CD8-positive, alpha-beta T cell (primary cell): ENCODE measurements at regions of chr6 and their contacts with region 1.

Region 1: DNA sequence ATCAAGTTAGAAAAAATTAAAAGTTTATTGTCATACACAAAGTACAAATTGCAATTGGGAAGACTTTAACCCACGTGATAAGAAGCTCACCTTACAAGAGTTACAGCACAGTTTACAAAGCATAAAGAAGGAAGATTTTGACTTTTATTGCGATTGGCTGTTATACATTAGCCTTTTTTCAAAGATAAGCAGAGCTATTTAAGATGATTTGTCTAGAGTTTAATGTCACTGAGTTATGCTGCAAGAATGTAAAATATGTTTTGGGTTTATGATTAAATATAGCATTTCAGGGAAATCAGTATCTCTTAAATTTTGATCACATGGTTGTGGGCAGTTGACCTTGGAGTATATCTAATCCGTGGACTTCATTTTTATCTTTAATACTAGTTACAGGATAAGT is 664.2 kb upstream of the PTCHD4 start:
- DNase-seq: no peak
- ATAC-seq: no peak
- H3K4me3 ChIP-seq: no peak overlapping the region
- H3K4me3 Mint-ChIP-seq: no peak overlapping the region
- H3K27ac ChIP-seq: no peak overlapping the region
- H3K27ac Mint-ChIP-seq: no peak overlapping the region
- H3K4me1 ChIP-seq: no peaks in the 10 kb centered on the region
- H3K4me1 Mint-ChIP-seq: no peaks in the 10 kb centered on the region
- H3K27me3 ChIP-seq: no peaks in the 10 kb centered on the region
- H3K27me3 Mint-ChIP-seq: no peaks in the 10 kb centered on the region
- CTCF ChIP-seq: no peak

Region 2: DNA sequence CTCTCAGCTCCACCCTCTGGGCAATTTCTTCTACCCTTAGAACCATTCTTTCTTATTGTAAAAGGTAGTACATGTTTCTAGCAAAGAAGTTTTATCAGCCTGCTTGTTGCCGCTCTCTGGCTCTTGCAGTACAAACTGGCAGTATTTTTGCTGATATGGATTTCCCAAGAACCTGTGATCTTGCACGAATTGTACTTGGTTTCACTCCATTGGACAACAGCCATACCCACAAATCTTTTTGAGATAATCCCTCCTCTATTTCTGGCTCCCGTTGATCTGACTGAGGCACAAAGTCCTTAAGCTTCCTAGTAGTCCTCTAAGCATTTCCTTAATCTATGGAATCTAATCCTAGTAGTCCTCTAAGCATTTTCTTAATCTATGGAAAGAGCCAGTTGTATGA is 177.2 kb before region 1 on chr6:
- CTCF ChIA-PET with region 1: no interaction called
- POLR2A ChIA-PET with region 1: no interaction called
- intact Hi-C with region 1: no loop called
- DNase-seq: no peak
- ATAC-seq: no peak
- H3K4me3 ChIP-seq: no peak overlapping the region
- H3K4me3 Mint-ChIP-seq: no peak overlapping the region
- H3K27ac ChIP-seq: no peak overlapping the region
- H3K27ac Mint-ChIP-seq: no peak overlapping the region
- H3K4me1 ChIP-seq: no peaks in the 10 kb centered on the region
- H3K4me1 Mint-ChIP-seq: no peaks in the 10 kb centered on the region
- H3K27me3 ChIP-seq: no peaks in the 10 kb centered on the region
- H3K27me3 Mint-ChIP-seq: no peaks in the 10 kb centered on the region
- CTCF ChIP-seq: no peak

Region 3: GRCh38 chr6:48809245-48809644 is 34.1 kb after region 1 on chr6:
- CTCF ChIA-PET with region 1: no interaction called
- POLR2A ChIA-PET with region 1: no interaction called
- intact Hi-C with region 1: loop called in 1 of 2 experiments (anchors 1 kb)
- DNase-seq: no peak
- ATAC-seq: no peak
- H3K4me3 ChIP-seq: no peak overlapping the region
- H3K4me3 Mint-ChIP-seq: no peak overlapping the region
- H3K27ac ChIP-seq: no peak overlapping the region
- H3K27ac Mint-ChIP-seq: no peak overlapping the region
- H3K4me1 ChIP-seq: no peaks in the 10 kb centered on the region
- H3K4me1 Mint-ChIP-seq: no peaks in the 10 kb centered on the region
- H3K27me3 ChIP-seq: no peaks in the 10 kb centered on the region
- H3K27me3 Mint-ChIP-seq: no peaks in the 10 kb centered on the region
- CTCF ChIP-seq: no peak

Region 4: GRCh38 chr6:49582529-49582928 is 807.4 kb after region 1 on chr6:
- CTCF ChIA-PET with region 1: no interaction called
- POLR2A ChIA-PET with region 1: no interaction called
- intact Hi-C with region 1: no loop called
- DNase-seq: no peak
- ATAC-seq: no peak
- H3K4me3 ChIP-seq: no peak overlapping the region
- H3K4me3 Mint-ChIP-seq: no peak overlapping the region
- H3K27ac ChIP-seq: no peak overlapping the region
- H3K27ac Mint-ChIP-seq: no peak overlapping the region
- H3K4me1 ChIP-seq: no peaks in the 10 kb centered on the region
- H3K4me1 Mint-ChIP-seq: no peaks in the 10 kb centered on the region
- H3K27me3 ChIP-seq: no peaks in the 10 kb centered on the region
- H3K27me3 Mint-ChIP-seq: no peaks in the 10 kb centered on the region
- CTCF ChIP-seq: no peak